Spleen (tissue), 13 donors: ENCODE measurements at regions of chr9 and their contacts with region 1.

Region 1: GRCh38 chr9:98192503-98193335 is at the start of gene CORO2A:
- DNase-seq: peak; percentile 93
- H3K4me3 ChIP-seq: peak within 1 kb of the TSS; percentile 49 to 83 (median 73)
- H3K27ac ChIP-seq: peak within 1 kb of the TSS in 7 of 8 donors; percentile 47 to 85 (median 77)
- H3K4me1 ChIP-seq: peaks cover 2 to 35% (median 21%) of the 10 kb centered on the region in 6 donors
- H3K27me3 ChIP-seq: no peaks in the 10 kb centered on the region
- CTCF ChIP-seq: peak in 9 of 11 experiments; percentile 15 to 53 (median 33)
- POLR2A ChIP-seq: no peak
- total RNA-seq, gene CORO2A: 5.1 to 11.0 (median 6.8) TPM

Region 2: DNA sequence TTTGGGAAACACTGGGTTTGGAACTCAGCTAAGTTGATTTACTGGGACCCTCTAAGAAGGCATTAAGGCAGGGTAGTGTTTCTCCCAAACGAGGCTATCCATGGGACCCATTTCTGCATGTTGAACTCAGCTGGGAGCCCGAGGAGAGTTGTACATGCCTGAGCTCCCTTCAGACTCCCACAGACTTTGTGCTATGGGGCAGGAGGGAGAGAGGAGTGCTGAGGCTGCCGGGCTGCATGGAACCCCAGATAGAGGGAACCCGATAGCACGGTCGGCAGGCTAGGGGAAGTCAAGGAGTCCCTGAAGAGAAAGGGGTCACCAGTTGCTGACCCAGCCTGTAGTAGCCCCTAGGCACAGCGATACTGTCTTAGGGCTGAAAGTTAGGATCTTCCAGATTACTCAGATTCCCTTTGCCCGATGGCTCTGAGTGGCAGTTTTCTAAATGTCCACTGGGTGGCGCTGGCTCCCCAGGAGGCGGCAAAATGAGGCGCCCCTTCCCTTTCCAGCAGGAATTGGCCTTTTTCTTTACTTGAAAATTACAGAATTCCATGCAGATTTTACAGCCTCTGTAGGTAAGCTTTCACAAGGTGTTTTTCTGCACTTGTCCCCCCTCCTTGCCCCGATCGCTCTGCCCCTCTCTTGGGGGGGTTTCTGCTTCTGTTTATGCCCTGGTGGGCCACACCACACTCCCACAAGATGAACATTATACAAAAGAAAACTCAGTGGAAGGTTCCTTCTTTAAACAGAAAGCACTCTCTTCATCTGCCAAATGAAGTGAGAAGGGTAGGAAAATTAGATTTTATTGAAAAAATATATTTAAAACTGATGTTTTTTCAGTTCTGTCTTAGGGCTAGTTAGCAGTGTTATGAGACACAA is 118.4 kb before region 1 on chr9:
- intact Hi-C with region 1: loop called (anchors 10 kb)
- DNase-seq: peak; percentile 89
- H3K4me3 ChIP-seq: no peak overlapping the region
- H3K27ac ChIP-seq: peak overlapping the region; percentile 19 to 77 (median 54)
- H3K4me1 ChIP-seq: peaks cover 12 to 48% (median 28%) of the 10 kb centered on the region in 6 donors
- H3K27me3 ChIP-seq: no peaks in the 10 kb centered on the region
- CTCF ChIP-seq: peak; percentile 81 to 97 (median 94)
- POLR2A ChIP-seq: no peak

Region 3: DNA sequence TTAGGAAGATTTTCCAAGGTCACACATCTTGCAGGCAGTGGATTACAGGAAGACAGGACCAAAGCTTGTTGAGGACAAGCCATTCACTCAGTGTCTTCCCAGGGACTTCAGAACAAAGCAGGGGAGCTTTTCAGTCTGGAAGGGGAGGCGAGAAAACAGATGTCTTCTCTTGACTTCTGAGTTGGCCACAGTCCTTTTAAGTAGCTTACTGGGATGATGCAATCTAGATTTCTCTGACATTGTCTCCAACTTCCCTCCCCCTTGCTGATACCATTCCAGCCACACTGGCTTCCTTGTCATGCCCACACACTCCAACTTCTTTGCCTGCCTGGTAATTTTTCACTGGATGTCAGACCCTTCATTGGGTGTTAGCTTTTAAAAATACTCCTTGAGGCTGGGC is 236.9 kb after region 1 on chr9:
- intact Hi-C with region 1: no loop called
- DNase-seq: no peak
- H3K4me3 ChIP-seq: no peak overlapping the region
- H3K27ac ChIP-seq: no peak overlapping the region
- H3K4me1 ChIP-seq: no peaks in the 10 kb centered on the region
- H3K27me3 ChIP-seq: no peaks in the 10 kb centered on the region
- CTCF ChIP-seq: no peak
- POLR2A ChIP-seq: no peak